ENCODE measurements at regions of chr3 and their contacts with region 1.

Region 1: DNA sequence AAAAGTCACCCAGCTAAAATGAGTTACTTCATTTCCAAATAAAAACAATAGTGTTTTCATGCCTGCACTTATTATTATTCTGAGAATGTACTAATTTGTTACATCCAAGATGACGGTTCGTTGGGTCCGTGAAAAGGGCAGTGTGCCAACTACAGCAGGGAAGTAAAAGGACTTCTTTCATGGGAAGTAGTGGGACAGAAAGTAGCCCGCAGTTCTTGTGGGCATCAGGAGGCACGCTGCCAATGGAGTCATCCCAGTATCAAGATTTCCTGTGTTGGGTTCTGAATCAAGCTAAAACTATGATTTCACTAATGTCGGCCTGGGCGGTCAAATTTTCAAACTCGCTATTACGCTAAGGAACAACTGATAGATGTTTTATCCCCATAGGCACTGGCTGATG is 254.5 kb upstream of the SOX2 start:
- DNase-seq: peak; percentile 69 to 97 (median 88)

Region 2: DNA sequence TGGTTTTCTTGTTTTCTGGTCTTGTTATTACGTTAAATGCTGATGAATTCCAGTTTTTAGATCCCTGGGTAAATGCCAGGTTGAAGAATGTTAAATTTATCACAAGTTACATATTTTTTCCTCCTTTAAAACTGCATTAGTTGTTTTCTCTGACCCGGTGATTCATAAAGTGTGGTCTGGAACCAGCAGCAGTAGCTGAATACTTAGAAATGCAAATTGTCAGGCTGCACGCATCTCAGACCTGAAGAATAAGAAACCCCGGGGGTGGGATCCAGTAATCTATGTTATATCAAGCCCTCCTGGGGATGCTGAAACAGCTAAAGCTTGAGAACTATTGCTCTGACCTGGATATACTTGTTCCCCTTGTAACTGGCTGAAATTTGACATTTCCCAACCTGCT is 1489.6 kb before region 1 on chr3:
- intact Hi-C with region 1: no loop called
- DNase-seq: no peak

Region 3: DNA sequence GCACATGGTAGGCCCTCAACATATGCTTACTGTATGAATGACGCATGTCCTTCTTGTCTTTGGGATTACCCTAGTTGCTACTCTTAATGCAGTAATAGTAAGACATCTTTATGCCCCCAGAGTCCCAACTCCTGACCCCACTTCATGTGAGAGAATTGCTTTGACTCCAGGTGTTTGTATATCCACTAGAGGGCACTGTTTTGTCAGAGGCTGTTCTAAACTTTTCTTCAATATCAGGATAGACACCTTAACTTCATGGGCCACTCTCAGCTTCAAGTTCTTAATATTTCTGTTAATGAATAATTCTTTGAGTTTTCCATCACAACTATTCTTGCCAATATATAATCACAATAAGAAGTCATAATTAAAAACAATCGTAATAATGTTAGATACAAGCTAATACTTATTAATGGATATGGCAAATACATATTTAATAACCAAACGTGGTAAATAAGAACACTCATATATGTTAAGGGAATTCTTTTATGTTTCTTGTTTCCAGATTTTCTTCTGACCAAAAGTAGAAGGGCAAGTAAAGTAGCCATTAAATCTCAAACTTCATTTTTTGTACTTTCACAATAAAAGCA is 130.5 kb before region 1 on chr3:
- intact Hi-C with region 1: loop called (anchors 2 kb)
- DNase-seq: no peak